IMR-90 (cell line): ENCODE measurements at regions of chr20 and their contacts with region 1.

Region 1: GRCh38 chr20:13784893-13785715 is at the starts of genes ESF1 and NDUFAF5:
- DNase-seq: peak; percentile 97
- ATAC-seq: peak; percentile 97
- H3K4me3 ChIP-seq: peak within 1 kb of the TSS; percentile 68
- H3K27ac ChIP-seq: peak within 1 kb of the TSS; percentile 69
- H3K4me1 ChIP-seq: peaks cover 3% of the 10 kb centered on the region
- H3K27me3 ChIP-seq: no peaks in the 10 kb centered on the region
- CTCF ChIP-seq: no peak
- POLR2A ChIP-seq: peak; percentile 36; the same call in 1 of the 2 replicates
- RAD21 ChIP-seq: no peak
- total RNA-seq, gene ESF1: 2.7 and 5.3 TPM in 2 replicates
- total RNA-seq, gene NDUFAF5: 6.8 and 22.8 TPM in 2 replicates

Region 2: DNA sequence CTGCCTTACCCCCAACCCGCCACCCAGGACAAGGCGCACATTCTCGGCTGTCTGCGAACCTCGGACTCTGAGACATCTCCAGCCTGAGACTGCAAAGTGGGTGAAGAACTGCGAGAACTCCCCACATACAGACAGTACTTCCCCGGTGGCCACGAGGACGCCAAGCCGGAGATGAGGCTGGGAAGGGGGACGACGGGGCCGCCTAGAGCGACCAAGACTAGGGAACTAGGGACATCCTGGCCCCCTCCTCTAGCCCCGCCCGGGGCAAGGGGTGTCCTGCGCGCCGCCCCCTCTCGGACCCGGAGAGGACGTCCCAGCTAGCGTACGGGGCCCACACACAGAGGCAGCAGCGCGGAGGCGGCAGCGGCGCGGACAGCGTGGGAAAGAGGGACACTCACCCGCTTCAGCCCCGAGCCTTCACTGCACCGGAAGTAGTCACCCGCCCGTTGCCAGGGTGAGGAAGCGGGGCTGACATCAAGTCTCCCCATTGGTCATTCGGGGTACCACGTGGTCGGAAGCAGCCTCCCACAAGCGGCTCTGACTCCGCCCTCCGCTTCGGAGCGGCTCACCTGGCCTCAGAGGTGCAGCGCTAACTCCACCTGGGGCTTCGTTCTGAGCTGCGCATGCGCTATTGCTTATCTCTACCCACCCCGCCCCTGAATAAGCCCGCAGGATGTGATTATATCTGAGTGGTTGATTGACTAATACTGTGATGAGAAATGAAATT is 146.4 kb before region 1 on chr20 and contains the start of gene TASP1:
- CTCF ChIA-PET with region 1: no interaction called
- POLR2A ChIA-PET with region 1: no interaction called
- dilution Hi-C with region 1: no loop called
- in situ Hi-C with region 1: no loop called
- intact Hi-C with region 1: loop called (anchors 10 kb)
- DNase-seq: peak; percentile 94
- ATAC-seq: peak; percentile 99
- H3K4me3 ChIP-seq: peak within 1 kb of the TSS; percentile 84
- H3K27ac ChIP-seq: peak within 1 kb of the TSS; percentile 78
- H3K4me1 ChIP-seq: no peaks in the 10 kb centered on the region
- H3K27me3 ChIP-seq: peaks cover 2% of the 10 kb centered on the region; the same call in 1 of the 2 replicates
- CTCF ChIP-seq: no peak
- POLR2A ChIP-seq: peak; percentile 83
- RAD21 ChIP-seq: no peak
- total RNA-seq, gene TASP1: 7.9 and 9.7 TPM in 2 replicates